Caco-2 (cell line): ENCODE measurements at regions of chr16 and their contacts with region 1.

Region 1: GRCh38 chr16:54627616-54628015 is 303.0 kb upstream of the IRX5 start:
- DNase-seq: no peak
- H3K4me3 ChIP-seq: no peak overlapping the region
- H3K4me3 Mint-ChIP-seq: peak overlapping the region; percentile 13
- H3K27ac Mint-ChIP-seq: peak overlapping the region; percentile 75
- H3K4me1 ChIP-seq: peaks cover 33% of the 10 kb centered on the region
- H3K4me1 Mint-ChIP-seq: peaks cover 42% of the 10 kb centered on the region
- H3K27me3 ChIP-seq: no peaks in the 10 kb centered on the region
- H3K27me3 Mint-ChIP-seq: no peaks in the 10 kb centered on the region
- CTCF ChIP-seq: no peak

Region 2: DNA sequence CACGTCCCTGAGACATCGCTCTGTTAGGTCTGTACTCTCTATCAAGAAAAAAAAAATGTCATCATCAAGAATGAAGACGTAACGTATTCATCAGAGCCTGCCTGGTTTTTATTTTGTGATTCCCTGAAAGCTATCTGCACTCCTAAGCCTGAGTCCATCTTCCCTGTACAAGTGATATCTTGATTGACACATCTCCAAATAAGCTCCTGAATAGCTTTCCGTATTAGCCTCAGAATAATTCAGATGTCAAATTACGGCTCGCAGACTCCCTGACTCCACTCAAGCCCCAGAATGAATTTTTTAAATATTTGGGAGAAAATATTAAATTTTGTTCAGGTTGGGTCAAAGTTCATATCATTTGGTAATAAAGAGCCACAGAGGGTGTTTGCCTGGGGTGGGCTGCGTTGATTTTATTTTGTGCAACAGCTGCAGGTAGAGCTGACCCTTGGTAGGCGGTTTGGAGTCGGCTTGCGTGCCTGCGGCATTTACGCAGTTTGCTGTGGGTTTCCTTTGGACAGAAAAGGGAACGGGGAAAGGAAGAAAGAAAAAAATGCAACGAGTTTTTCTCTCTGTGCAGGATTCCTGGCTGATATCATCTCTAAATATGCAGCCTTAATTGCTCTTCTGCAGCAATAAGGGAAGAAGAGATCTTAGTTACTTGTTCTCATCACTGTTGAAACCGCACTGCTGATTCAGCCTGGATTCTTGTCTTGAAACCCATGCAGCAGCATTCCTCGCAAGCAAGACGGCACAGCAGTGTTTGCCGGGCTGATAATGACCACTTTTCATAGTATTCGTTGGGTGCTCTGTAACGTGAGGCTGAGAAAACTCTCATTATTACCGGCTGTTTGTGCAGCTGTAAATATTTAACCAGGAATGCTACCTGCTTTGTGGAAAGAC is 455.7 kb before region 1 on chr16:
- CTCF ChIA-PET with region 1: no interaction called
- POLR2A ChIA-PET with region 1: no interaction called
- intact Hi-C with region 1: loop called (anchors 5 kb)
- DNase-seq: peak; percentile 69 to 76
- H3K4me3 ChIP-seq: peak overlapping the region; percentile 22
- H3K4me3 Mint-ChIP-seq: peak overlapping the region; percentile 54
- H3K27ac Mint-ChIP-seq: no peak overlapping the region
- H3K4me1 ChIP-seq: peaks cover 48% of the 10 kb centered on the region
- H3K4me1 Mint-ChIP-seq: peaks cover 39% of the 10 kb centered on the region
- H3K27me3 ChIP-seq: no peaks in the 10 kb centered on the region
- H3K27me3 Mint-ChIP-seq: no peaks in the 10 kb centered on the region
- CTCF ChIP-seq: no peak

Region 3: DNA sequence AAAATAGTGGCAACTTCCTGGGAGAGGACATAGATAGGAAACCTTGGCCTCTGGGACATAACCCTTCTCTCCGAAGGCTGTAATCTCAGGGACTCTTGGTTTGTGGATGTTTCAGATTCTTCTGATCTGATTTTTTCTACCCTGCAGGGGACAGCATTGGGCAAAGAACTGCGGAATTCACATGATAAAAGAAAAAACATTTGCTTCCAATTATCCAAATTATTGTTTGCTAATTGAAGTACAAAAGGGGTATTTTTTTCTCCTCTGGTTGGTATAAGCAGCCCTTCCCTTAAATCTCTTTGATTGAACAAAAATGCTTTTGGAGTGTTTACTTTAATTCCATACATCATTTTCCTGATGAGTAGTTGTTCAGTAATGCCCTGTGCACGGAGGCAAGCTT is 89.3 kb before region 1 on chr16:
- CTCF ChIA-PET with region 1: interaction called, 4 read pairs
- POLR2A ChIA-PET with region 1: no interaction called
- intact Hi-C with region 1: loop called (anchors 1 kb)
- DNase-seq: peak in 1 of 2 experiments; percentile 31
- H3K4me3 ChIP-seq: no peak overlapping the region
- H3K4me3 Mint-ChIP-seq: no peak overlapping the region
- H3K27ac Mint-ChIP-seq: no peak overlapping the region
- H3K4me1 ChIP-seq: peaks cover 23% of the 10 kb centered on the region
- H3K4me1 Mint-ChIP-seq: peaks cover 8% of the 10 kb centered on the region
- H3K27me3 ChIP-seq: no peaks in the 10 kb centered on the region
- H3K27me3 Mint-ChIP-seq: no peaks in the 10 kb centered on the region
- CTCF ChIP-seq: peak; percentile 41 to 61

Region 4: DNA sequence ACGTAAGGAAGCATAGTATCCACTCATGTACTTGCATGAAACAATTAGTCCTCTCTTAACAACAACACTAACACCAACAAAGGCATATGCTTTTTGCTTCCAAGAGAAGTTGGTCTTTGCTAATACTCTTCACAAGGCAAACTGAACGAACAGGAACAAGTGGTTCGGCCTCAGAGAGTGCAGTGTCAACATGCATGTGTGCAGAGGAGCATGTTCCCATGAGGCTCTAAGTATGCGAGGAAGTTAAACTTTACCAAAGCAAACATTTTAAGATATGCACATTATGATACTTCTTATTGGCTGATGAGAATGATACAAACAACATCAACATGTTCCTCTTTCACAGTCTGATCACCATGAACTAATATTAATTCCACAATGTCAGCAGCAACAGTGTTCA is 17.7 kb after region 1 on chr16:
- CTCF ChIA-PET with region 1: no interaction called
- POLR2A ChIA-PET with region 1: interaction called, 3 read pairs
- intact Hi-C with region 1: loop called (anchors 1 kb)
- DNase-seq: peak in 1 of 2 experiments; percentile 36
- H3K4me3 ChIP-seq: no peak overlapping the region
- H3K4me3 Mint-ChIP-seq: no peak overlapping the region
- H3K27ac Mint-ChIP-seq: no peak overlapping the region
- H3K4me1 ChIP-seq: peaks cover 7% of the 10 kb centered on the region; the same call in 1 of the 2 replicates
- H3K4me1 Mint-ChIP-seq: peaks cover 6% of the 10 kb centered on the region
- H3K27me3 ChIP-seq: no peaks in the 10 kb centered on the region
- H3K27me3 Mint-ChIP-seq: no peaks in the 10 kb centered on the region
- CTCF ChIP-seq: no peak

Region 5: DNA sequence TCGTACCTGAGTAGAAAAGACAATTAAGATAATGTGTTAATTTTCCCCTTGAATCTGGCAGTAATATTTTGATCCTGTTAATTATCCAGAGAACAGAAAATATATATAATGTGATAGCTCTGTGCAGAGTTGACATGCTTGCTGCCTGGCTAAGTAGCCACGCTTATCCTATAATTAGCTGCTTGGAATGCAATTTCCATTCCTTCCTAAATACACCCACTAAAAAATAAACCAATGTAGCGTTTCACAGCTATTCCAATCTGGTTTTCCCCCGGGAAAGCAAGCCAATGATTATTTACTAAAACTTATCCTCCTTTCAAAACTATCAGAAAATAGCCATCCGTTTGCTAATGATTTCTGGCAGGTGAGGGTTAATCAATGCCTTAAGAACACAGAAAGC is 168.6 kb after region 1 on chr16:
- CTCF ChIA-PET with region 1: no interaction called
- POLR2A ChIA-PET with region 1: interaction called, 3 read pairs
- intact Hi-C with region 1: loop called (anchors 1 kb)
- DNase-seq: no peak
- H3K4me3 ChIP-seq: no peak overlapping the region
- H3K4me3 Mint-ChIP-seq: peak overlapping the region; percentile 15
- H3K27ac Mint-ChIP-seq: peak overlapping the region; percentile 63
- H3K4me1 ChIP-seq: peaks cover 26% of the 10 kb centered on the region
- H3K4me1 Mint-ChIP-seq: peaks cover 13% of the 10 kb centered on the region
- H3K27me3 ChIP-seq: no peaks in the 10 kb centered on the region
- H3K27me3 Mint-ChIP-seq: no peaks in the 10 kb centered on the region
- CTCF ChIP-seq: no peak